ENCODE measurements at regions of chr2 and their contacts with region 1.

Region 1: DNA sequence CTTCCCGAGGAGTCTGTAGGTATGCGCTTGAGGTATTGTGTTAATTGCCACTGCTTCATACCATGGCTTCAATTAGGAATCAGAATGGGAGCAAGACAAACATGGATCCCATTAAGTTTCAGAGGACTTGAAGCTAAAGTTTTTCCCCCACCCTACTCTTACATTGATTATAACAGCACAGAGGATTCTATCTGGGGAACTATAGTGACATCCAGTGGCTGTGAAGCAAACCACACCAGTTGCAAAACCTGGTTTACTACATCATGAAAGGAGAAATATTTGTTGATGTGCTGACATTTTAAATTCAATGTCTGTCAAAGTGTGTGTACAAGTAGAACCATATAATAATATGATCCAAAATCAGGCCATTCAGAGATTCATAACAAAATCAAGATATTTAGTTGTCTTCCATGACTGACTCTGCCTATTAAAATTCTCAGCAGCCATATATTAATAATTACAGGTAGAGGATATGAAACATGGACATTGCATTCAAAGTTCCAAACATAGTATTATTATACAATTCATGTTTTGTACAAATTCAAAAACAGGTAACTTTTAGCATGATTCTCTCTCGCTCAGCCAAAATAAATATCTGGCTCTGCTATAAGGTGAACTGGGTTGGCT is 82.9 kb downstream of the GRB14 start:
- H3K4me3 ChIP-seq: no peak overlapping the region
- H3K27ac ChIP-seq: no peak overlapping the region
- H3K4me1 ChIP-seq: peaks cover 8% of the 10 kb centered on the region; the same call in 1 of the 2 replicates
- CTCF ChIP-seq: peak; percentile 37; the same call in 1 of the 2 replicates

Region 2: GRCh38 chr2:164498836-164499235 is 39.5 kb before region 1 on chr2:
- CTCF ChIA-PET with region 1: interaction called, 13 read pairs
- POLR2A ChIA-PET with region 1: no interaction called
- H3K4me3 ChIP-seq: no peak overlapping the region
- H3K27ac ChIP-seq: no peak overlapping the region
- H3K4me1 ChIP-seq: no peaks in the 10 kb centered on the region
- CTCF ChIP-seq: no peak

Region 3: DNA sequence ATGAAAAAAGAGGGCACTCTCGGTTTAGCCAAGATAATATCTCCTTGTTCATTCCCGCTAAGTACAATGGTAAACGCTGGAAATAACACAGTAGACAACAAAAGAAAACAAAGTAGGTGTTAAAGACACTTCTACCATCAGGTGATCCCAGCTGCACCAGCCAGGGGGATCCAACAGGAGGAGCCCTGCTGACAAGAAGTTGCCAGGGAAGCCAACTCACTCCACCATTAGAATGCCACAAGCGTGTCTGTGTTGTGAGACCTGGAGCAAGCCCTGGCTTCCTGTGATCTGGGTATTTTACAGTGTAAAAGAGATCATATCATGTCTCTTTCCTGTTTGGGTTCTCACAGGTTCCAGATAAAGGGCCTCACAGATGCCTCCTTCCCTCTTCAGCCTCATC is 34.1 kb before region 1 on chr2:
- CTCF ChIA-PET with region 1: interaction called, 13 read pairs
- POLR2A ChIA-PET with region 1: no interaction called
- H3K4me3 ChIP-seq: no peak overlapping the region
- H3K27ac ChIP-seq: no peak overlapping the region
- H3K4me1 ChIP-seq: no peaks in the 10 kb centered on the region
- CTCF ChIP-seq: no peak

Region 4: GRCh38 chr2:164644036-164644700 is 105.8 kb after region 1 on chr2:
- CTCF ChIA-PET with region 1: no interaction called
- POLR2A ChIA-PET with region 1: no interaction called
- H3K4me3 ChIP-seq: no peak overlapping the region
- H3K27ac ChIP-seq: no peak overlapping the region
- H3K4me1 ChIP-seq: no peaks in the 10 kb centered on the region
- CTCF ChIP-seq: no peak

Measured in HEK293 (cell line).